ENCODE measurements at regions of chr6 and their contacts with region 1.

Region 1: GRCh38 chr6:81465859-81466258 is 286.6 kb downstream of the TENT5A start:
- DNase-seq: peak; percentile 24
- ATAC-seq: no peak
- H3K4me3 ChIP-seq: no peak overlapping the region
- H3K27ac ChIP-seq: no peak overlapping the region
- H3K4me1 ChIP-seq: no peaks in the 10 kb centered on the region
- H3K27me3 ChIP-seq: no peaks in the 10 kb centered on the region
- CTCF ChIP-seq: peak; percentile 55
- POLR2A ChIP-seq: no peak
- RAD21 ChIP-seq: peak; percentile 56

Region 2: DNA sequence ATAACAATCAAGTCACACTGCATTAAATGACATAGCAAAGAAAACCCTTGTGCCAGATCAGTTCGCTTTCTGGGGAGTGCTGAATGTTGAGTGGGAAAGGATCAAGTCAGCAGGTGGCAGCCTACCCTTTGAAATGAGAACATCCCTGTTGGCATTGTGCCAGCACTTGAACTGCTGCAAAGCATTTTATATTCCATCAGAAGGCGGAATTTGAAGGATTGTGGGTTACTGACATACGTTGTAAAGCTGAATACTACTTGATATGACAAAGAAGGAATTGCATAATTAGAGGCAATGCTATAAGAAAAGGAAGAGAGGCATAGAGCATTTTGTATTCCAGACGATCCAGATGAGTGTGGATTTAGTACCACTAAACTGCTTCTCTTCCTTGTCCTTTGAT is 1332.8 kb before region 1 on chr6:
- CTCF ChIA-PET with region 1: no interaction called
- POLR2A ChIA-PET with region 1: no interaction called
- dilution Hi-C with region 1: no loop called
- in situ Hi-C with region 1: no loop called
- intact Hi-C with region 1: loop called (anchors 5 kb)
- DNase-seq: peak; percentile 72
- ATAC-seq: no peak
- H3K4me3 ChIP-seq: no peak overlapping the region
- H3K27ac ChIP-seq: no peak overlapping the region
- H3K4me1 ChIP-seq: no peaks in the 10 kb centered on the region; the same call in 1 of the 2 replicates
- H3K27me3 ChIP-seq: no peaks in the 10 kb centered on the region
- CTCF ChIP-seq: peak; percentile 59
- POLR2A ChIP-seq: no peak
- RAD21 ChIP-seq: peak; percentile 76

Region 3: GRCh38 chr6:80143419-80143937 is 1322.4 kb before region 1 on chr6:
- CTCF ChIA-PET with region 1: no interaction called
- POLR2A ChIA-PET with region 1: no interaction called
- dilution Hi-C with region 1: no loop called
- in situ Hi-C with region 1: no loop called
- intact Hi-C with region 1: loop called (anchors 5 kb)
- DNase-seq: peak; percentile 85
- ATAC-seq: peak; percentile 78
- H3K4me3 ChIP-seq: no peak overlapping the region
- H3K27ac ChIP-seq: no peak overlapping the region
- H3K4me1 ChIP-seq: peaks cover 3% of the 10 kb centered on the region
- H3K27me3 ChIP-seq: no peaks in the 10 kb centered on the region
- CTCF ChIP-seq: no peak
- POLR2A ChIP-seq: no peak
- RAD21 ChIP-seq: no peak

Region 4: DNA sequence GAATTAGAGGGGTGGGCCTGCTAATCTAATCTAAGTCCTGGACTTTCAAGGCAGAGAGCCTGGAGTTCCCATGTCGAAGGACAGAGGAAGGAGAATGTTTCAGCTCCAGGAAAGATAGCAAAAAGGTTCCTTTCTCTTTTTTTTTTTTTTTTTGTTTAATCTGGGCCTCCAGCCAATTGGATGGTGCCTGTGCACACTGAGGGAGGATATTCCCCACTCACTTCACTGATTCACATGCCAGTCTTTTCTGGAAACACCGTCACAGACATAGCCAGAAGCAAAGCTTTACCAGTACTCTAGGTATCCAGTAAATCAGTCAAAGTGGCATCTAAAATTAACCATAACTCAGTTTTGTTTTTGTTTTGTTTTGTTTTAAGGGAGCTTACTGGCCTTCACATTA is 434.4 kb before region 1 on chr6:
- CTCF ChIA-PET with region 1: no interaction called
- POLR2A ChIA-PET with region 1: no interaction called
- dilution Hi-C with region 1: no loop called
- in situ Hi-C with region 1: no loop called
- intact Hi-C with region 1: no loop called
- DNase-seq: no peak
- ATAC-seq: no peak
- H3K4me3 ChIP-seq: no peak overlapping the region
- H3K27ac ChIP-seq: no peak overlapping the region
- H3K4me1 ChIP-seq: no peaks in the 10 kb centered on the region
- H3K27me3 ChIP-seq: no peaks in the 10 kb centered on the region
- CTCF ChIP-seq: no peak
- POLR2A ChIP-seq: no peak
- RAD21 ChIP-seq: no peak